ENCODE measurements at regions of chr19 and their contacts with region 1.

Region 1: GRCh38 chr19:14073261-14073924 is 807 bp downstream of the MISP3 start:
- DNase-seq: peak; percentile 80
- H3K4me3 ChIP-seq: peak overlapping the region; percentile 44 to 84 (median 70)
- H3K27ac ChIP-seq: peak overlapping the region; percentile 95 to 98 (median 97)
- H3K4me1 ChIP-seq: peaks cover 11 to 52% (median 31%) of the 10 kb centered on the region in 4 donors
- H3K27me3 ChIP-seq: no peaks in the 10 kb centered on the region
- CTCF ChIP-seq: peak in 4 of 5 experiments; percentile 2 to 56 (median 26)
- EP300 ChIP-seq: no peak
- POLR2A ChIP-seq: peak; percentile 63

Region 2: DNA sequence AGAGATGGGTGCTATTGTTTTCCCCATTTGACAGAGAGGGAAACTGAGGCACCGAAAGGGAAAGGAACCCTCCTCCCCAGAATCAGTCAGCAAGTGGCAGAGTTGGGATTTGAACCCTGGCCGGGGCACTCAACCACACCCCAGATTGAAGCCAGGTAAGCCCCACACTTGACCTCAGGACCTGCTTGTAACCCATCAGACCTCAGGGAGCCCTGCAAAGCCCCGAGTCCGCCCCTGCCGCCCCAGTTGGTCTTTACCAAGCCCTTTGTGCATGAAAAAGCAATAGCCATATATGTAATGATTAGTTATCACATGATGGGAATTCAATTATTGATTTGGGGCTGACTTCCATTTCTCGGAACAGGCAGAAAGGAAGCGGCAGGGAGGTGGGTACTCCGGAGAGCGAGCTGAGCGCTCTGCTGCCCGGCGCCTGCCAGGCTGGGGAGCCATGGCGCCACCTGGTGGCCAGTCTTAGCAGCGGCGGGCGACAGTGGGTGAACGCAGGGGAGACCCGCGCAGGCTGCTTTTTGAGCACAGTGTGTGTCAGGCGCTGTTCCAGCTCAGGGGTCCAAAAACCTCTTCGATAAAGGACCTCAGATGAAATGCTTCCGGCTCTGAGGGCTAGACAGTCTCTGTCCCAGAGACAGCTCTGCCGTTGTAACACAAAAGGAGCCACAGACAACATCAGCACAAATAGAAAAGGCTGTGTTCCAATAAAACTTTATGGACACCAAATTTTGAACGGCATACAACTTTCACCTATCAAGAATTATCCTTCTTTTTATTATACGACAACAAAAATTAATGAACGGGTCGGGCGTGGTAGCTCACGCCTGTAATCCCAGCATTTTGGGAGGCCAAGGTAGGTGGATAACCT is 484.2 kb before region 1 on chr19:
- in situ Hi-C with region 1: loop called in 1 of 4 experiments (anchors 25 kb)
- intact Hi-C with region 1: no loop called
- DNase-seq: peak; percentile 72
- H3K4me3 ChIP-seq: no peak overlapping the region
- H3K27ac ChIP-seq: no peak overlapping the region
- H3K4me1 ChIP-seq: no peaks in the 10 kb centered on the region
- H3K27me3 ChIP-seq: peaks cover 23% of the 10 kb centered on the region
- CTCF ChIP-seq: peak; percentile 86 to 99 (median 98)
- EP300 ChIP-seq: no peak
- POLR2A ChIP-seq: no peak

Region 3: DNA sequence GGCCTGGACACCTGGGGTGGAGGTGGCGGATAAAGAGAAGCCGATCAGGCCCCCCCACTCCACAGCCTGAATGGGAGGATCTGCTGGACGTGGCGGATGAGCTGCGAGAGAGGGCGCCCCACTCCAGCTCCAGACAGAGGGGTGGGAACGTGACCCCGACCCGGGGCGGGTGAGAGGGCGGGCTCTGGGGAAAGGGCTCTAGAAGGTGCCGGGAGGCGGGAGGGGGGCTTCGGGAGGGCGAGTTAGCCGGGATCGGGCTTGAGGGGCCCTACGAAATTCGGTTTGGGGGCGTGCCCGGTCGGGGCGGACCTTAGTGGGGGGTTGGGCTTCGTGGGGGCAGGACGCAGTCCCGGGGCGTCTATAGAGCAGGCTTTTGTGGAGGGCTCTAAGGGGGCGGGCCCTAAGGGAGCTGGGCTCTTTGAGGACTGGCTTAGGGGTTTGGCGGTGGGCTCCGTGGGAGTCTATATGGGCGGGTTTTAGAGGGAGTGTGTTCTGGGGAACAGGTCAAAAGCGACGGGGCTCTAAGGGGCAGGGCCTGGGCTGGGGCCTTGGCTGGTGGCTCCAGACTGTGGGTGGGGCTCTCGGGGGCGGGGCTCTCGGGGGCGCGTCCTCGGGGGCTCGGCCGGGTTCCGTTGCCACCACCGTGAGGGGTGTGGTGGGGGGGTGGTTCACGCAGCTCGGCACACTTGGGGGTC is 200.6 kb before region 1 on chr19:
- in situ Hi-C with region 1: loop called (anchors 10 to 25 kb)
- intact Hi-C with region 1: no loop called
- DNase-seq: no peak
- H3K4me3 ChIP-seq: peak overlapping the region; percentile 27 to 53 (median 38)
- H3K27ac ChIP-seq: peak overlapping the region in 3 of 4 donors; percentile 19 to 43 (median 26)
- H3K4me1 ChIP-seq: peaks cover 0 to 12% (median 7%) of the 10 kb centered on the region in 4 donors
- H3K27me3 ChIP-seq: no peaks in the 10 kb centered on the region
- CTCF ChIP-seq: peak in 3 of 5 experiments; percentile 8 to 31 (median 26)
- EP300 ChIP-seq: no peak
- POLR2A ChIP-seq: no peak

Region 4: DNA sequence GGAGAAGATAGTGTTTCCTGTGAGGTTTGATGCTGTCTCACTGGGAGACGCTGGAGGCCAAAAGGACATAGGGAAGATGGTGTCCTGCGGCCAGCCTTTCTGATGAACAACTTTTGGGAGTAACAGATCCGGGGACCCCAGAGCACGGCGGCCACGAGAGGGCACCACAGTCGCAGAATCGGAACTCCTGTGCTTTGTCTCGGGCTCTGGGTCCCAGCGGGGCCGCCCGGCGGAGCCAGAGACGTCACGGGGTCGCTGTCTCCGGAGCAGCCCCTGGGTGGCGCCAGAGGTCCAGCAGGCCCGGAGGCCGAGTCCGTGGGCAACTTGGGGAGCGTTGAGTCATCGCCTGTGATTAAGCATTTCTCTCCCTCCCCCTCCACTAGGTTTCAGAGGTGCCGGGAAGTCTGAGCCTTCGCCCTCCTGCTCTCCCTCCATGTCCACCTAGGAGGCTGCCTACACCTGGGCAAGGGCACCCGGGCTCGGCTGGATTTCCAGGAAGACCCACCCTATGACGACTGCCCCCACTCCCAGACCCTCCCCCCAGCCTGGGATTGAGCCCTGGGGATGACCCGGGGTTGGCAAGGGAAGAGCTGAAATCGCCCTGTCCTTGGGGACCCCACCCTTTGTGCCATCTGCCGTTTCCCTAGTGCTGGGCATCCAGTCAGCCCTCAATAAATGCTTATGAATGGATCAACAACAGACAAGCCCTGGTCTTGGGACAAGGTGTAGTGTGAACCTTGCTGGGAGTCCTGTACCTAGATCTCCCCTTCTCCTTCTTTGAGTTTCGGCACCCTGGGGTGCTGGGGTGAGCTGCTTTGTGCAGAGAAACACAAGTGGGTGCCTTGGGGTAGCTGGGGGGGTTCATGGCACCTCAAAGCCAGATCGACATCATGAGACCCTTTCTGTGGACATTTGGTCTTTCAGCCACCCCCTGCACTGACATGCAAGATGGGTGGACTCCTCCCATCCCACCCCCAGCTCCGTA is 193.0 kb before region 1 on chr19:
- in situ Hi-C with region 1: loop called (anchors 10 to 25 kb)
- intact Hi-C with region 1: loop called (anchors 2 kb)
- DNase-seq: peak; percentile 99
- H3K4me3 ChIP-seq: peak overlapping the region in 2 of 4 donors; percentile 18 to 26
- H3K27ac ChIP-seq: peak overlapping the region; percentile 72 to 85 (median 84)
- H3K4me1 ChIP-seq: peaks cover 14 to 41% (median 35%) of the 10 kb centered on the region in 4 donors
- H3K27me3 ChIP-seq: no peaks in the 10 kb centered on the region
- CTCF ChIP-seq: peak; percentile 97 to 100 (median 98)
- EP300 ChIP-seq: peak; percentile 18
- POLR2A ChIP-seq: no peak

Region 5: GRCh38 chr19:14136509-14137281 is 63.3 kb after region 1 on chr19 and contains the start of gene ASF1B:
- in situ Hi-C with region 1: no loop called
- intact Hi-C with region 1: loop called (anchors 5 kb)
- DNase-seq: peak; percentile 98
- H3K4me3 ChIP-seq: peak within 1 kb of the TSS; percentile 50 to 76 (median 58)
- H3K27ac ChIP-seq: peak within 1 kb of the TSS; percentile 94 to 96 (median 94)
- H3K4me1 ChIP-seq: peaks cover 14 to 27% (median 22%) of the 10 kb centered on the region in 4 donors
- H3K27me3 ChIP-seq: no peaks in the 10 kb centered on the region
- CTCF ChIP-seq: peak; percentile 62 to 93 (median 79)
- EP300 ChIP-seq: no peak
- POLR2A ChIP-seq: peak; percentile 84
- total RNA-seq, gene ASF1B: 1.9 to 4.5 (median 4.4) TPM in 3 of 4 donors, not detected in the other

Measured in transverse colon (tissue), 4 donors.